ENCODE measurements at regions of chr4 and their contacts with region 1.

Region 1: DNA sequence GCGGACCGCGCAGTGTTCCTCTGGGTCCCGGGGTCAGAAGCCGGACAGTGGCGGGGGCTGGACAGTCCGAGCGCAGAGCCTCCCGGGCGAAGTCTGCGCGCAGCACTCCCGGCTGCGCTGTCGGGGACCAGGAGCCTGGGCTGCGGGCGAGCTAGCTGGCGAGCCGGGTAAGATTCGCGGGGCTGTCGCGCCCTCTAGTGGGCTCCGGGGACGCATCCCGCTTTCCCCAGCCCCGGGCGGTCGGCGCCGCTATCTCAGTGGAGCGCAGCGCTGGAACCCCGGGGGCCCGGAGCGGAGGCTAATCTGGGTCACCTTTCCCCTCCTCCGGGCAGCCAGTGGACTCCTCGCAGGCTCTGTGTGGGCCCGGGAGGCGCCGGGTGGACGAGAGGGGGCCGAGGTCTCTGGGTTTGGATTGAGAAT is 4.2 kb downstream of the PDGFRA start:
- DNase-seq: no peak
- ATAC-seq: peak; percentile 97
- H3K4me3 ChIP-seq: peak overlapping the region; percentile 63; the same call in 1 of the 2 replicates
- H3K27ac ChIP-seq: no peak overlapping the region
- H3K4me1 ChIP-seq: 0 out of 2 replicates have a peak, but pooled peaks cover 7% of the 10 kb centered on the region
- H3K27me3 ChIP-seq: peaks cover 18 to 22% of the 10 kb centered on the region in 2 experiments
- CTCF ChIP-seq: peak; percentile 74 to 84 (median 83)
- EP300 ChIP-seq: no peak
- POLR2A ChIP-seq: no peak
- RAD21 ChIP-seq: peak; percentile 73

Region 2: GRCh38 chr4:52545099-52546069 is 1687.9 kb before region 1 on chr4:
- CTCF ChIA-PET with region 1: interaction called, 11 read pairs
- POLR2A ChIA-PET with region 1: no interaction called
- RAD21 ChIA-PET with region 1: interaction called, 3 read pairs
- SMC1A ChIA-PET with region 1: no interaction called
- in situ Hi-C with region 1: no loop called
- intact Hi-C with region 1: loop called (anchors 10 kb)
- DNase-seq: peak; percentile 7
- ATAC-seq: peak; percentile 91
- H3K4me3 ChIP-seq: no peak overlapping the region
- H3K27ac ChIP-seq: no peak overlapping the region
- H3K4me1 ChIP-seq: no peaks in the 10 kb centered on the region
- H3K27me3 ChIP-seq: no peaks in the 10 kb centered on the region
- CTCF ChIP-seq: peak; percentile 93 to 96 (median 95)
- EP300 ChIP-seq: no peak
- POLR2A ChIP-seq: no peak
- RAD21 ChIP-seq: peak; percentile 93

Region 3: GRCh38 chr4:53015681-53016080 is 1217.6 kb before region 1 on chr4:
- CTCF ChIA-PET with region 1: interaction called, 6 read pairs
- POLR2A ChIA-PET with region 1: no interaction called
- RAD21 ChIA-PET with region 1: interaction called, 9 read pairs
- SMC1A ChIA-PET with region 1: interaction called, 7 read pairs
- in situ Hi-C with region 1: loop called (anchors 10 kb)
- intact Hi-C with region 1: loop called (anchors 5 kb)
- DNase-seq: no peak
- ATAC-seq: 0 out of 3 replicates have a peak, but pooled peaks have one; percentile 25
- H3K4me3 ChIP-seq: no peak overlapping the region
- H3K27ac ChIP-seq: no peak overlapping the region
- H3K4me1 ChIP-seq: peaks cover 8% of the 10 kb centered on the region; the same call in 1 of the 2 replicates
- H3K27me3 ChIP-seq: no peaks in the 10 kb centered on the region
- CTCF ChIP-seq: peak; percentile 47 to 67 (median 55)
- EP300 ChIP-seq: no peak
- POLR2A ChIP-seq: no peak
- RAD21 ChIP-seq: peak; percentile 83

Region 4: GRCh38 chr4:53037892-53038291 is 1195.4 kb before region 1 on chr4:
- CTCF ChIA-PET with region 1: no interaction called
- POLR2A ChIA-PET with region 1: no interaction called
- RAD21 ChIA-PET with region 1: no interaction called
- SMC1A ChIA-PET with region 1: no interaction called
- in situ Hi-C with region 1: no loop called
- intact Hi-C with region 1: no loop called
- DNase-seq: no peak
- ATAC-seq: no peak
- H3K4me3 ChIP-seq: no peak overlapping the region
- H3K27ac ChIP-seq: no peak overlapping the region
- H3K4me1 ChIP-seq: no peaks in the 10 kb centered on the region
- H3K27me3 ChIP-seq: no peaks in the 10 kb centered on the region
- CTCF ChIP-seq: no peak
- EP300 ChIP-seq: no peak
- POLR2A ChIP-seq: no peak
- RAD21 ChIP-seq: no peak

Region 5: GRCh38 chr4:53908661-53909078 is 324.6 kb before region 1 on chr4:
- CTCF ChIA-PET with region 1: interaction called, 44 read pairs
- POLR2A ChIA-PET with region 1: no interaction called
- RAD21 ChIA-PET with region 1: interaction called, 19 read pairs
- SMC1A ChIA-PET with region 1: interaction called, 20 read pairs
- in situ Hi-C with region 1: no loop called
- intact Hi-C with region 1: loop called (anchors 1 kb)
- DNase-seq: peak; percentile 8
- ATAC-seq: peak; percentile 83
- H3K4me3 ChIP-seq: no peak overlapping the region
- H3K27ac ChIP-seq: no peak overlapping the region
- H3K4me1 ChIP-seq: no peaks in the 10 kb centered on the region
- H3K27me3 ChIP-seq: peaks cover 0 to 3% of the 10 kb centered on the region in 2 experiments; a peak in 1 of 4 replicates
- CTCF ChIP-seq: peak; percentile 58 to 71 (median 59); a peak in 5 of 6 replicates
- EP300 ChIP-seq: no peak
- POLR2A ChIP-seq: no peak
- RAD21 ChIP-seq: peak; percentile 60

Region 6: DNA sequence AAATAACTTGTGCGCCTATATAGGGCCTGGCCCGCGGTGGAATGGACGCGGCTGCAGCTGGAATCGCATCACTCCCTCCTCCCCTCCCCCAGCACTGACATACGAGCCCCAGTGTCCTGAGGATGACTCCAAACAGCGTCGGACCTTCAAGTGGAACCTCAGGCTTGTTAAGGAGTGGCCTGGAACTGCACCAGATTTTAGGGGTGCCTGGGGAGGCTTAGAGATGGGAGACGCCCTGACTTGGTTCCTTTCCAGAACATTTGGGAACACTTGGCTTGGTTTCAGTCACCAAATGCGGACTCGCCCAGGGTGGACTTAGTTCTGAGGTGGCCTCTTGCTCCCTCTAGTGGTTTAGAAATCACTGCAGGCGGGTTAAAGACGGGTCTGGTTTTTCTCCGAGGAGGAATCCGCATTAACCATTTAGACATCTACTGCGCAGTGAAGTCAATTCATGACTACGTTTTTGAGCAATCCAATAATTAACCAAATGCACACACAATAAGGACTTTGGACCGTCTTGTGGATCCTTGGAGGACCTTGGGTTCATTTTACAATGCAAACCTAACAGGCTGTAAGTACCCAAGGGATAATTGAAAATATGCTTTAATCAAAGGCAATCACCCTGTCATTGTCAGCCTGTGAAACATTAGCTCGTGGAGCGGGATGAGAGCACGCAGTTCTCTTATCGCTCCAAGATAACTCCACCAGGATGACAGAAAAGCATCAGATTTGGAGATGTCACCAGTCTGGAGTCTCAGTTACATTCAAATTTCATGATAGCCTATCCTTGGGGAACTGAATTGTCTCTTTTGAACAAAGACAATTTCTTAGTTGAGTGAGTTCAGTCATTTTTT is 15.4 kb before region 1 on chr4:
- CTCF ChIA-PET with region 1: interaction called, 22 read pairs
- POLR2A ChIA-PET with region 1: no interaction called
- RAD21 ChIA-PET with region 1: interaction called, 3 read pairs
- SMC1A ChIA-PET with region 1: interaction called, 4 read pairs
- in situ Hi-C with region 1: no loop called
- intact Hi-C with region 1: no loop called
- DNase-seq: no peak
- ATAC-seq: peak; percentile 97
- H3K4me3 ChIP-seq: no peak overlapping the region
- H3K27ac ChIP-seq: no peak overlapping the region
- H3K4me1 ChIP-seq: no peaks in the 10 kb centered on the region
- H3K27me3 ChIP-seq: no peaks in the 10 kb centered on the region; a peak in 2 of 4 replicates
- CTCF ChIP-seq: peak; percentile 71 to 90 (median 76); a peak in 5 of 6 replicates
- EP300 ChIP-seq: no peak
- POLR2A ChIP-seq: no peak
- RAD21 ChIP-seq: peak; percentile 92

Region 7: GRCh38 chr4:54473077-54473545 is 239.8 kb after region 1 on chr4:
- CTCF ChIA-PET with region 1: no interaction called
- POLR2A ChIA-PET with region 1: no interaction called
- RAD21 ChIA-PET with region 1: no interaction called
- SMC1A ChIA-PET with region 1: no interaction called
- in situ Hi-C with region 1: no loop called
- intact Hi-C with region 1: no loop called
- DNase-seq: no peak
- ATAC-seq: no peak
- H3K4me3 ChIP-seq: no peak overlapping the region
- H3K27ac ChIP-seq: no peak overlapping the region
- H3K4me1 ChIP-seq: no peaks in the 10 kb centered on the region
- H3K27me3 ChIP-seq: no peaks in the 10 kb centered on the region
- CTCF ChIP-seq: no peak
- EP300 ChIP-seq: no peak
- POLR2A ChIP-seq: no peak
- RAD21 ChIP-seq: no peak